ENCODE measurements at regions of chr12 and their contacts with region 1.

Region 1: DNA sequence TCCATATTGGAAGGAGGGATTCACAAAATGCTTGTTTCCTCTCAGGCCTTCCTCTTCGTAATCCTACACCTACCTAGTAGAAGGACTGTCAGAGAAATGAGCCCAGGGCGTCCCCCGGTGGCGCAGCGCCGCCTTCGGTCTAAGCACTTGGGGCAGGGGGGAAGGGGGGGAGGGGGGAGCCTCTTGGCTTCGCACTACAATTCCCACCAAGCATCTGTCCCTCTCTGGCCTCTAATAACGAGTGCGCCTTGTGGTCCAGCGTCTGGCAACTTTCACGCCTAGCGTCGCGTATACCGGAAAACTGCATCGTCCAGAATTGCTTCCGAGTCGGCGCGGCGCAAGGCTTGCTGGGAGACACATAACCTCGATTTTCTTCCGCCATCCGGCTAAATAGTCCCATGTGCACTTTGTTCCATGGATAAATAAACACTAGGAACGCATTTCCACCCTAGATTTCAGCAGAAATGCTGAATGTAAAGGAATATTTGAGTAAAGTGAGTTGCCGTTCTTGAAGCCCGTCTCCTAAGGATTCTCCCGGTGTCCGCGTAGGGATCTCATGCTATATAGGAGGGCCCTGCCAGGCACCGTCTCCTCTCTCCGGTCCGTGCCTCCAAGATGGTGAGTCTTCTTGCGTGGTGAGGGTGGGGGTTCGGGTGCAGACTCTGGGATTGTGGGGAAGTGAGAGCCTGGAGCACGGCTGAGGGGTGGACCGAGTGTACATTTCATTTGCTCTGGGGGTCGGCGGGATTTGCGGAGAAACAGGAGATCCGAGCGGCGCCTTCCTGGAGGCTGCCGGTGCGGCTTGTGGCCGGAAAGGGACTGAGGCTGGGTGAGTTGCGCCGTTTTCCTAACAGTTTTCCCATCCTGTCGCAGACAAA is at the start of gene RPS26:
- DNase-seq: peak; percentile 95
- H3K4me3 Mint-ChIP-seq: peak within 1 kb of the TSS; percentile 98
- H3K27ac Mint-ChIP-seq: peak within 1 kb of the TSS; percentile 98
- H3K4me1 Mint-ChIP-seq: peaks cover 47% of the 10 kb centered on the region
- H3K27me3 Mint-ChIP-seq: no peaks in the 10 kb centered on the region
- total RNA-seq, gene RPS26: 28.1 to 40.7 TPM

Region 2: GRCh38 chr12:55823419-55823818 is 218.4 kb before region 1 on chr12:
- CTCF ChIA-PET with region 1: no interaction called
- POLR2A ChIA-PET with region 1: no interaction called
- intact Hi-C with region 1: loop called (anchors 2 kb)
- DNase-seq: no peak
- H3K4me3 Mint-ChIP-seq: no peak overlapping the region
- H3K27ac Mint-ChIP-seq: peak overlapping the region; percentile 92
- H3K4me1 Mint-ChIP-seq: peaks cover 58% of the 10 kb centered on the region
- H3K27me3 Mint-ChIP-seq: no peaks in the 10 kb centered on the region

Region 3: DNA sequence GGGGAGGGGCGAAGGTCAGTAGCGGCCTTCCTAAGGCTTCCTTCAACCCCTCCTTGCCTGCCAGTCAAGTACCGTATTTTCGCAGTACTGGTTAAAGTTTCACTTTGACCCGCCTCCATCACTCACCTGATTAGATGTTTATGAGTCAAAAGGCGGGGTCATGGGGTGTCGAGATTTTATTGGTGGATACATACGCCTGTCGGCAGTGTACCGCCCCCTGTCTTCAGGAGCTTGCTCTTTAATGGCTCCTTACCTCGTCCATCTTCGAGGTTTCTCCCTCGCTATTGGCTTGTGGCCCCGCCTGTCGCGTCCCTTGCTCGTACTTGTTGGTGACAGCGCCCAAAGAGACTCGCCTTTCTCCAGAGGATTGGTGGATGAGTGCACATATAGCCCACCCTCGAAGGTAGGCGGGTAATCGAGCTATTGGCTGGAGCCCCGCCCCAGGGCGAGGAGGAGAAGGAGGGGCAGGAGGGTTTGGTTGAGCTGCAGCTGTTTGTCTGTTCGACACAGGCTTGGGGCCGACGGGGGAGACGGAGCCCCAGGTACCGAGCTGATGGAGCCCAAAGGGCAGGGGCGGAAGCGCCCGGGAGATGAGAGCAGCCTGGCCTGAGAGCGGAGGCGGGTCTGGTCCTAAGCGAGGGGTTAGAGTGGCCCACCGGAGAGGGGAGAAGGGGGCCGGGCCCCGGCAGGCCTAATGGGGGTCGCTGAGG is 68.0 kb before region 1 on chr12 and contains the start of gene RAB5B:
- CTCF ChIA-PET with region 1: interaction called, 4 read pairs
- POLR2A ChIA-PET with region 1: interaction called, 7 read pairs
- intact Hi-C with region 1: loop called (anchors 1 kb)
- DNase-seq: peak; percentile 99
- H3K4me3 Mint-ChIP-seq: no peak within 1 kb of the TSS
- H3K27ac Mint-ChIP-seq: no peak within 1 kb of the TSS
- H3K4me1 Mint-ChIP-seq: peaks cover 19% of the 10 kb centered on the region
- H3K27me3 Mint-ChIP-seq: no peaks in the 10 kb centered on the region
- total RNA-seq, gene RAB5B: 44.8 to 46.4 TPM

Region 4: DNA sequence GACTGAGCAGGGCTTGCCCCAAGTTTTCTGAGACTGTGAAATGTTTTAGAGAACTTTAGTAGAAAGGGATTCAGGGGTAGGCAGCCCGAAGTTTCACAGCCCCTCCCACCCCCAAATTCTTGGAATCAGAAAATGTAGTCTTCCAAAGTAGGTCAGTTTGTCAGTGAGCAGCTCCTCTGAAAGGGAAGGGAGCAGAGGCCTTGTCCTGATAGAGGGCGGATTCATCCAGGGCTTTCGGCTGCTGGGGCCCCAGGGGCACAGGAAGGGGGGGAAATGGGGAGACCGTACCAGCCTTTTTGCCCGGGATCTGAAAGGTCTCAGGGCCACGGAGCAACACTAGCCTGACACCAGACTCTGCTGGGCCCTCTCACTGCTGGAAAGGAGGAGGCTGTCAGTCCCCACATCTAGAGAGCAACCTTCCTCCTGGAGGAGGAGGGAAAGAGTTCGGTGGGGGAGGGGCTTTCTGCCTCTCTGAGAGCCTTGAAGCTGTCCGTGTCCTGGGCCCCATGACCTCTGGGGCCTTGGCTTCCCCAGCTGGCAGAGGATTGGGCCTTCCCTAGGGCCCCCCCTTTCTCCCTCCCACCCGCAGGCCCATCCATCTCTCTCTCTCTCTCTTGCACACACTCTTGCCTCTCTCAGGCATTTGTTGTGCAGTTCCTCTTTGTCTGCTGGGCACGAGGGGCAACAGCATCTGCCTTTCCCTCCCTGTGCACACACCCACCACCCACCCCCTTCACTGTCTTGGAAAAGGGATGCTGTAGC is 21.2 kb before region 1 on chr12 and contains the start of gene IKZF4:
- CTCF ChIA-PET with region 1: interaction called, 8 read pairs
- POLR2A ChIA-PET with region 1: interaction called, 4 read pairs
- intact Hi-C with region 1: loop called (anchors 2 kb)
- DNase-seq: peak; percentile 41
- H3K4me3 Mint-ChIP-seq: peak within 1 kb of the TSS; percentile 83
- H3K27ac Mint-ChIP-seq: peak within 1 kb of the TSS; percentile 80
- H3K4me1 Mint-ChIP-seq: peaks cover 32% of the 10 kb centered on the region
- H3K27me3 Mint-ChIP-seq: no peaks in the 10 kb centered on the region
- total RNA-seq, gene IKZF4: 14.4 to 15.1 TPM

Region 5: GRCh38 chr12:56078990-56079664 is 37.3 kb after region 1 on chr12:
- CTCF ChIA-PET with region 1: interaction called, 3 read pairs
- POLR2A ChIA-PET with region 1: no interaction called
- intact Hi-C with region 1: loop called (anchors 2 kb)
- DNase-seq: peak; percentile 74
- H3K4me3 Mint-ChIP-seq: peak overlapping the region; percentile 74
- H3K27ac Mint-ChIP-seq: no peak overlapping the region
- H3K4me1 Mint-ChIP-seq: peaks cover 5% of the 10 kb centered on the region
- H3K27me3 Mint-ChIP-seq: peaks cover 7% of the 10 kb centered on the region

Region 6: DNA sequence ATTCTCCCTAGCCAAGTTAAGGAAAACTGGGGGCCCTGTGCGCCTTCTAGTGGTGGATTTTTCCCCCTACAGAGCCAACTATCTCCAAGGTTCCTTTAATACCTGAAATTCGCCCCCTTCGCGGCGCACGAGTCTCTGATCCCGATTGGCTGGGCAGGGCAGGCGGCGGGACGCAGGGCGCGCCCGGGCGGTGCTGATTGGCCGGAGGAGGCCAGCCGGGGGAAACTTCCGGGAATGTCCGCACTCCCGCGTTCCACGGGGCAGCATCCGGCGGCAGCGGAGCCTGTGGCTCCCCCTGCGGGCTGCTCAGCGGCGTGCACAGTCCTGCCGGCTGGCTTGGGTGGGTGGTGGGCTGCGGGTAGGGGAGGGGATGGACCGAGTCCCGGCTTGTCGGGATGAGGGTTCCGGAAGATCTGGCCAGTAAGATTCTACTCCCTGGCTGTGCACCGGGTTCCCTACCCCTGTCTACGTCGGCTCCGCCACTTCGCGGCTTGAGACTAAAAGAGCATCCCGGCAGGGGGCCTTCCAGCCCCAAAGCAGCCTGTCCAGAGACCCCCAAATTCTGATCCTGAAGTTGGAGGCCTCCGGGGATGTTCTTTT is 182.4 kb after region 1 on chr12 and contains the start of gene NABP2:
- CTCF ChIA-PET with region 1: interaction called, 3 read pairs
- POLR2A ChIA-PET with region 1: no interaction called
- intact Hi-C with region 1: loop called (anchors 5 kb)
- DNase-seq: peak; percentile 97
- H3K4me3 Mint-ChIP-seq: peak within 1 kb of the TSS; percentile 96
- H3K27ac Mint-ChIP-seq: peak within 1 kb of the TSS; percentile 80
- H3K4me1 Mint-ChIP-seq: peaks cover 33% of the 10 kb centered on the region
- H3K27me3 Mint-ChIP-seq: no peaks in the 10 kb centered on the region
- total RNA-seq, gene NABP2: 62.0 to 62.2 TPM